A549 (cell line): ENCODE measurements at regions of chr14 and their contacts with region 1.

Region 1: DNA sequence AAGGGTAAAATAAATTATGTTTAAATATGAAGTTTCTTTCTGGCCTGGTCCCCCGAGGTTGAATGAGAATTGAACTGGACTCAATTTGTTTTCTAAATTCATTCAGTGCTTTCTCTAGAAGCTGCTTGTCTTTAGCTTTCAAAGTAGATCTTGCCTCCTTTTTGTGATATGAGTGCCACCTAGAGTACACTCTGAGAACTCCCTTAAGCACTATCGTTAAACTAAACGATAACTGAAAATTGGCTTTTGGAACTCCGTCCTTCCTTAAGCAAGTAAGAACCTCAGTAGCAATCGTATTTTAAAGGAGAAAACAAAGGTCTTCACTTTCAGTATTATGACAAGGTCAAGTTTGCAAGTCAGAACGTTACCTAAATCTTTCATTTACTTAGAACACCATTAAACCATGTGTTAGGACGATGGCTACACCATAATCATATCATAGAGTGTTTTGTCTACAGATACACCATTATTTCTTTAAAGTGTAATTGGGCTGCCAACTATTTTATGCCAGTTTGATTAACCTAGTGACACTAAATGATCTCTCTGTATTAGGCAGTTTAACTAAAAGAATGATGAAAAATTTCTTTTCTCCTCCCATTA is 364.8 kb downstream of the SNAPC1 start:
- DNase-seq: peak; percentile 31 to 58
- ATAC-seq: peak; percentile 75 to 91; a peak in 3 of 6 replicates
- H3K4me3 ChIP-seq: no peak overlapping the region
- H3K27ac ChIP-seq: no peak overlapping the region
- H3K4me1 ChIP-seq: no peaks in the 10 kb centered on the region
- CTCF ChIP-seq: peak; percentile 81
- EP300 ChIP-seq: no peak
- POLR2A ChIP-seq: no peak
- RAD21 ChIP-seq: peak; percentile 88

Region 2: DNA sequence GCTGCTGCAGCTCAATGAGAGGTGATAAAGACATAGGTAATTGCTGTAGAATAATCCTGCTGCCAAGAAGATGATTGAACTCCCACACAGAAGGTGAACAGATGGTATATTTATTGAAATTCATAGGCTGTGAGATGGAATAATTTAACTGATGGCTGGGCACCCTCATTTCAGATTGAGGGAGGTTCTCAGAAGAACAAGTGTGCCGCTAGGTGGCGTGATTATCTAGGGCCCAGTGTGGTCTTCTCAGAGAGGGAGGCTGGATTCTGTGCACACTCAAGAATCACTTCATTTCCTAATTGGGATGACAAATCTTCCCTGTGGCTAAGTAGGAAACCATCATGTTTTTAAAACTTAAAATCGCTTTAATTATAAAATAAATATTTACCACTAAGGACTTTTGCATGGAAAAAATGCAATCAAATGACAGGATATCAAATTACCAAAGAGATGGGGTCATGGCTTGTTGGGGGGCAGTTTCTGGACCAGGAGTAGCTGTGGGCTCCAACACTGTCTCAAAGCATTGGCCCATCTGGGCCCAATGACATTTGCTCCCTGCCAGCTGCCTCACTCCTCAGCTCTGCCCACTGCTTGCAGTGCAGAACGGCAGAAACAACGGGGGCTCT is 232.4 kb before region 1 on chr14:
- CTCF ChIA-PET with region 1: interaction called, 14 read pairs
- POLR2A ChIA-PET with region 1: no interaction called
- DNase-seq: peak; percentile 69
- ATAC-seq: peak; percentile 73 to 90; a peak in 5 of 6 replicates
- H3K4me3 ChIP-seq: no peak overlapping the region
- H3K27ac ChIP-seq: no peak overlapping the region
- H3K4me1 ChIP-seq: no peaks in the 10 kb centered on the region
- CTCF ChIP-seq: peak; percentile 72
- EP300 ChIP-seq: no peak
- POLR2A ChIP-seq: no peak
- RAD21 ChIP-seq: peak; percentile 61 to 72

Region 3: GRCh38 chr14:62269204-62269603 is 142.2 kb after region 1 on chr14:
- CTCF ChIA-PET with region 1: no interaction called
- POLR2A ChIA-PET with region 1: no interaction called
- DNase-seq: no peak
- ATAC-seq: no peak
- H3K4me3 ChIP-seq: no peak overlapping the region
- H3K27ac ChIP-seq: no peak overlapping the region
- H3K4me1 ChIP-seq: no peaks in the 10 kb centered on the region
- CTCF ChIP-seq: no peak
- EP300 ChIP-seq: no peak
- POLR2A ChIP-seq: no peak
- RAD21 ChIP-seq: no peak